Activated T-helper 1 cell treated with anti-CD3 and anti-CD28 coated beads, Interleukin-12 subunit alpha, Interleukin-12 subunit beta, Interleukin-2, Interleukin-4 antibody, amounts not matched to agents 30 ng/mL and 10 ng/mL and 1 ng/mL, durations not matched to agents 14 hours and 24 hours and 36 hours (primary cell): ENCODE measurements at regions of chr4 and their contacts with region 1.

Region 1: DNA sequence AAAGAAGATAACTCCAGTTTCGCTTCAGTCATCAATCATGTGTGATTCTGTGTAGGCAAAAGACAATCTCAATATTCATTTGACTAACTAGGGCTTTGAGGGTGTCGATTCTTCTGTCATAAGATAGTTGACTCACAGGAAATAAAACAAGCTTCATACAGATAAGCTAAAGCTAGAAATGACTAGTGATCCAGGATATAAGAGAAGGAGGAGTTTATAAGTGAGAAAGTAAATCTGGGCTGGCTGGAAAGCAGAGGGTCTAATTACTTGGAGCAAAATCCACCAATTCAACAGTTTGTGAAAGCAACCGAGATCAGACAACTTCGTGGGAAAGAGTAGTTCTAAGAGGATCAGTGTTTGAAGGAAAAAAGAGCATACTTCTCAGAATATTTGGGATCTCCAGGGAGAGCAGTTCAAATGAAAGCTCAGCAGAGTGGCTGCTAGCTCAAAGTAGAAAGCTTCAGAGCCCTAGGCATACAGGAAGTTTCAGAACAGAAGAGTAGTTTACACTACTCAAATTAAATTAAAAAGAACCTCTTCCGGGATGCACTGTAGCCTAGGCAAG is 429.3 kb downstream of the INPP4B start:
- DNase-seq: no peak
- H3K4me3 Mint-ChIP-seq: peak overlapping the region; percentile 50
- H3K27ac Mint-ChIP-seq: peak overlapping the region; percentile 91
- H3K4me1 Mint-ChIP-seq: peaks cover 33% of the 10 kb centered on the region
- H3K27me3 Mint-ChIP-seq: no peaks in the 10 kb centered on the region

Region 2: GRCh38 chr4:142095886-142096605 is 320.7 kb before region 1 on chr4:
- intact Hi-C with region 1: no loop called
- DNase-seq: no peak
- H3K4me3 Mint-ChIP-seq: no peak overlapping the region
- H3K27ac Mint-ChIP-seq: no peak overlapping the region
- H3K4me1 Mint-ChIP-seq: no peaks in the 10 kb centered on the region
- H3K27me3 Mint-ChIP-seq: no peaks in the 10 kb centered on the region

Region 3: DNA sequence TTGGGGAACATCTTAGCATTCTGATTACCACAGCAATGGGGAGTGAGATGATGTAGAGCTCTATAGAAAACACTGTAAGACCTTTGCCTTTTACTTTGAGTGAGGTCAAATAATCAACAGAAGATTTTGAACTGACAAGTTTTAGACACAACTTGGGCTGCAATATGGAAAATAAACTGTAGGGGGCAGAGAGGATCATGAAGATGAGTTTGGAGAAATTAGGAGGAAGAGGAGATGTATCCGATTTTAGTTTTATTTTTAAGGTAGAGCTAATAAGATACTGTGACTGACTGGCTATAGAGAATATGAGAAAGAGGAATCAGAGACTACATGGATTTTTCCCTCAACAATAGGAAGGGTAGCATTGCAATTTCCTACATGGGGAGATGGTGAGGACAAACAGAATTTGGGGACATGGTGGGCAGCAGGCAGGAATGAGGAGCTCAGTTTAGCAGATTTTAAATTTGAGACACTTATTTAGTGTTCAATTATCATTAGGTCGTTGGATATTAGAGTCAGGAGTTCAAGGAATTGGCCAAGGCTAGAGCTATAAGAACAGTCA is 133.8 kb before region 1 on chr4:
- intact Hi-C with region 1: no loop called
- DNase-seq: no peak
- H3K4me3 Mint-ChIP-seq: no peak overlapping the region
- H3K27ac Mint-ChIP-seq: no peak overlapping the region
- H3K4me1 Mint-ChIP-seq: peaks cover 5% of the 10 kb centered on the region
- H3K27me3 Mint-ChIP-seq: no peaks in the 10 kb centered on the region

Region 4: DNA sequence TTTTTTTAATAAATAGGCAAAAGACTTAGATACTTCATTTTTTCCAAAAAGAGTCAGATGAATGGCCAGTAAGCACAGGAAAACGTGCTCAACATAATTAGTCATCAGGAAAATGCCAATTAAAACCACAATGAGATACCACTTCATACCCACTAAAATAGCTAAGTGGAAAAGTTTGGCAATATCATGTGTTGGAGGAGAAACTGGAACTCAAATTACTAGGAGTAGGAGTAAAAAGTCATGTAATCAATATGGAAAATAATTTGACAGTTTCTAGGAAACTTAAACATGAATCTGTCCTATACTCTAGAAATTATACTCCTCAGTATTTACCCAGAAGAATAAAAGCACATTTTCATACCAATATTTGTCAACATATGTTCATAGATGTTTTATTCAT is 20.5 kb before region 1 on chr4:
- intact Hi-C with region 1: loop called (anchors 1 kb)
- DNase-seq: no peak
- H3K4me3 Mint-ChIP-seq: peak overlapping the region; percentile 53
- H3K27ac Mint-ChIP-seq: peak overlapping the region; percentile 89
- H3K4me1 Mint-ChIP-seq: peaks cover 61% of the 10 kb centered on the region
- H3K27me3 Mint-ChIP-seq: no peaks in the 10 kb centered on the region

Region 5: DNA sequence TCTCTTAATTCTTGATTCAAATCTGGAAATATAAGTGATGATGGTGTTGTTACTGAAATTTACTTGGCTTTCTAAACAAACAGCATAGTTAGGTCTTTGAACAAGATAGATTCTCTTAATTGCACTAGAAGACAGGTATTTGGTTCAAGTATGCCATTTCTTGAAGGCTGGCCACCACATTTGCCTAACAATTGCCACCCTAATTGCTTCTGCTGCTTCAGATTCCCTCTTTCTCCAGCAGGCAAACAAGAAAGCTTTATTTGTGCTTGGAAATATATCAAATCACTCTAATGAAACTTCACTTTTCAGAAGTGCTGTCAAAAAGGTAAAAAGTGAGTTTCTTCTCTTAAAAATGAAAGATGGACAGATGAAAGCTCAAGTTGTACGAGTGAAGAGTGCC is 10.7 kb after region 1 on chr4:
- intact Hi-C with region 1: loop called (anchors 1 kb)
- DNase-seq: no peak
- H3K4me3 Mint-ChIP-seq: no peak overlapping the region
- H3K27ac Mint-ChIP-seq: no peak overlapping the region
- H3K4me1 Mint-ChIP-seq: no peaks in the 10 kb centered on the region
- H3K27me3 Mint-ChIP-seq: no peaks in the 10 kb centered on the region

Region 6: DNA sequence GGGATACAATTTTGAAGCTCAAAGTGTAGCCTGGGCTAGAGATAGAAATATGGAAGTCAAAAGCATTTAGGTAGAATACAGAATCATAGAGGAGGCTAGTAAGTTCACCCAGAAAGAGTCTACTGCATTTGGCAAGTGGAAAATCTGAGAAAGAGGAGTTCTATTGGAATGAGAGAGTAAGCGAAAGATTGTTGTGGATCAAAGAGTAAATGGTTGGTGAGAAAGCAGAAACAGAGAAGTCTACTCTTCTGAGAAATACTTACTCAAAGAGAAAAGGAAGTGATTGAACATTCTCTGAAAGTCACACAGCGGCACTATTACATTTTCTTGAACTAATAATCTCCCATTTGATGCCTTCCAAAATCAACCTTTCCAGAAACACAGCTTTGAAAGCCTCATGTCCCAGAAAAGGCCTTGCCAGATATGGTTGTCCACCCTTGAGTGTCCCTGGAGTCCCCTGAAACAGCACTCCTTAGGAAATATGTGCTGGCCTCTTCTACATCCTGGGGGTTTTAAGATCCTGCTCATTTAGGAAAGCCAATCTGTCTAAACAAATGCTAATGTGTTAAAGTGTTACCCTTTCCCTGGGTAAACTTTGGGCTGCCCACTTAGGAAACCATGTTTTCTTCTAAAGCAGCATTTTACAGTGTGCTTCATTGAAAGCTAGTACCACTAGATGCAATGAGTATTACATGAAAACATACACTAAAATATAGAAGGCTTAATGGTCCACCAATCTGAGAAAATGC is 296.7 kb after region 1 on chr4:
- intact Hi-C with region 1: loop called (anchors 5 kb)
- DNase-seq: no peak
- H3K4me3 Mint-ChIP-seq: peak overlapping the region; percentile 1
- H3K27ac Mint-ChIP-seq: peak overlapping the region; percentile 74
- H3K4me1 Mint-ChIP-seq: peaks cover 33% of the 10 kb centered on the region
- H3K27me3 Mint-ChIP-seq: no peaks in the 10 kb centered on the region